ENCODE measurements at regions of chr6 and their contacts with region 1.

Region 1: DNA sequence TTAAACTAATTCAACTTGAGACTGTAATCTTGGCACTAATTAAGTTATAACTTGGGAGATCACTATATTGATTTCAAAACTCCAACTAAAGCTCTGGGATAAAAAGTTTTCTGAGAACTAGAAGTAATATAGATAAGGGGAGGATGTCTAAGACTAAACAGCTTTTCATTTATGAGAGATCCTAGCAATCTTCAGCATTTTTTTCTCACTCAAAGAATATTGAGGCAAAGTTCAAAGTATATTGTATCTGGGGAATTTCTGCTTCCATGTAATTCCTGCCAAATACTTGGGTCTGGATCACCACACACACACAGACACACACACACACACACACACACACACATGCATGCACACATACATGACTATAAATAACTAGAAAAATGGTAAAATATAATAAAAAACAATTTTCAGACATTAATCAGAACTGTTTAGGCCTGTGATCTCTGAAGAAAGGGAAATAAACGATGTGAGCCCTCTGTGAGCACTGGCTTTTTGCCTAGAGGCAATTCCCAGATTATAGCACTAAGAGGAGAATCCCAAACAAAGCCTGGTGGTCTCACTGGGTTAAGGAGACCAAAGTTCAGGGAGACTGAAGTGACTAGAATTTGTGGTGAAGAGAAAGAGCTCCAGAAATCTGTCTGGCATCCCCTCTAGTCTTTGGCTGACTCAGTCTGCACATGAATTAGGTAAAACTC is 92.8 kb downstream of the ADAT2 start:
- DNase-seq: no peak
- H3K4me3 ChIP-seq: no peak overlapping the region
- H3K27ac ChIP-seq: no peak overlapping the region
- H3K4me1 ChIP-seq: no peaks in the 10 kb centered on the region
- H3K27me3 ChIP-seq: no peaks in the 10 kb centered on the region
- CTCF ChIP-seq: no peak
- POLR2A ChIP-seq: no peak

Region 2: DNA sequence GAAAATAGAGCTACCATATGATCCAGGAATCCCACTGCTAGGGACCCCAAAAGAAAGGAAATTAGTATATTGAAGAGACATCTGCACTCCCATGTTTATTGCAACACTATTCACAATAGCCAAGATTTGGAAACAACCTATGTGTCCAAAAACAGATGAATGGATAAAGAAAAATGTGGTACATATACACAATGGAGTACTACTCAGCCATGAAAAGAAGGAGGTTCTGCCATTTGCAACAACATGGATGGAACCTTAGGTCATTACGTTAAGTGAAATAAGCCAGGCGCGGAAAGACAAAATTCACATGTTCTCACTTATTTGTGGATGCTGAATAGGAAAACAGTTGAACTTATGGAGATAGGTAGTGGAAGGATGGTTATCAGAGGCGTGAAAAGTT is 44.5 kb before region 1 on chr6:
- intact Hi-C with region 1: no loop called
- DNase-seq: no peak
- H3K4me3 ChIP-seq: no peak overlapping the region
- H3K27ac ChIP-seq: no peak overlapping the region
- H3K4me1 ChIP-seq: no peaks in the 10 kb centered on the region
- H3K27me3 ChIP-seq: no peaks in the 10 kb centered on the region
- CTCF ChIP-seq: no peak
- POLR2A ChIP-seq: no peak

Region 3: DNA sequence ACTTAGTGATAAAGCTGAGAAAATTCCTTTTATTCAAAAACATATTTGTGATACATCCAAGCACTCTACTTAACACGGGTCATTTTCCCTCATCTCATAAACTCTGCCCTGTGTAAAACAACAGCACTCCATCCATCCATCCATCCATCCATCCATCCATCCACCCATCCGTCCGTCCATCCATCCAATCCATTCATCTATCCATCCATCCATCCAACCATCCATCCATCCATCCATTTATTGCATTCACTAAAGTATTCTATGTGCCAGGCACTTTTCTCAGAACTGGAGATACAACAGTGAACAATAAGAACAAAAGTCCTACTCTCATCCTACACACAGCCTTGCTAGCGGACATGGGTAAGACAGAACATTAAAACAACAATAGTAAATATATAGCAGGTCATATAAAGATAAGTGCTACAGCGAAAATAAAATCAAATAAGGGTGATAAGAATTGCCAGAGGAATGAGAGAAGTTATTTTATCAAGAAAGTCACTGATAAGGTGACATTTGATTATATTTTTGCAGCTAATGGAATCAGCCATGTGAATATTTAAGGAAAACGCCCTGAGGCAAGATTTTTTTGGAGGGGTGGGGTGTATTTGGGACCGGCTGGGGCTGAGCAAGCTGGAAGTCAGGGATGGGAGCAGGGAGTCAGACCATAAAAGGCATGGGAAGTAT is 14.6 kb after region 1 on chr6:
- intact Hi-C with region 1: loop called (anchors 2 kb)
- DNase-seq: no peak
- H3K4me3 ChIP-seq: no peak overlapping the region
- H3K27ac ChIP-seq: no peak overlapping the region
- H3K4me1 ChIP-seq: no peaks in the 10 kb centered on the region
- H3K27me3 ChIP-seq: no peaks in the 10 kb centered on the region
- CTCF ChIP-seq: no peak
- POLR2A ChIP-seq: no peak

Measured in breast epithelium (tissue), 4 donors.